ENCODE measurements at regions of chr12 and their contacts with region 1.

Region 1: GRCh38 chr12:42104087-42104486 is 40.6 kb downstream of the GXYLT1 start:
- DNase-seq: no peak
- H3K4me3 Mint-ChIP-seq: no peak overlapping the region
- H3K27ac Mint-ChIP-seq: no peak overlapping the region
- H3K4me1 Mint-ChIP-seq: no peaks in the 10 kb centered on the region
- H3K27me3 Mint-ChIP-seq: no peaks in the 10 kb centered on the region
- CTCF ChIP-seq: peak; percentile 30

Region 2: DNA sequence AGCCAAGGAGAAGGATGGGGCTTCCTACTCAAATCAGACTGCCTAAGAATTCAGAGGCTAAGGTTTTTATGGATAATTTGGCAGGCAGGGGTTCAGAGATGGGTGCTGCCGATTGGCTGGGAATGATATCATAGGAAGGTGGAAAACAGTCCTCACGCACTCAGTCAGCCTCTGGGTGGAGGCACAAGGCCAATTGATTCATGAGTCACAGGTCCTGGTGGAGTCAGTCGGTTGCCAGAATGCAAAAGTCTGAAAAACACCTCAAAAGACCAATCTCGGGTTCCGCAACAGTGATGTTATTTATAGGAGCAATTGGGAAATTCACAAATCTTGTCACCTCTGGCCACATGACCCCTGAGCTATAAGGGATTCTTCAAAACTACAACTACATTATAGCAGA is 64.9 kb before region 1 on chr12:
- CTCF ChIA-PET with region 1: no interaction called
- POLR2A ChIA-PET with region 1: no interaction called
- intact Hi-C with region 1: loop called (anchors 10 kb)
- DNase-seq: peak; percentile 83
- H3K4me3 Mint-ChIP-seq: no peak overlapping the region
- H3K27ac Mint-ChIP-seq: no peak overlapping the region
- H3K4me1 Mint-ChIP-seq: peaks cover 8% of the 10 kb centered on the region
- H3K27me3 Mint-ChIP-seq: no peaks in the 10 kb centered on the region
- CTCF ChIP-seq: no peak

Measured in MCF 10A (cell line).